ENCODE measurements at regions of chr13 and their contacts with region 1.

Region 1: DNA sequence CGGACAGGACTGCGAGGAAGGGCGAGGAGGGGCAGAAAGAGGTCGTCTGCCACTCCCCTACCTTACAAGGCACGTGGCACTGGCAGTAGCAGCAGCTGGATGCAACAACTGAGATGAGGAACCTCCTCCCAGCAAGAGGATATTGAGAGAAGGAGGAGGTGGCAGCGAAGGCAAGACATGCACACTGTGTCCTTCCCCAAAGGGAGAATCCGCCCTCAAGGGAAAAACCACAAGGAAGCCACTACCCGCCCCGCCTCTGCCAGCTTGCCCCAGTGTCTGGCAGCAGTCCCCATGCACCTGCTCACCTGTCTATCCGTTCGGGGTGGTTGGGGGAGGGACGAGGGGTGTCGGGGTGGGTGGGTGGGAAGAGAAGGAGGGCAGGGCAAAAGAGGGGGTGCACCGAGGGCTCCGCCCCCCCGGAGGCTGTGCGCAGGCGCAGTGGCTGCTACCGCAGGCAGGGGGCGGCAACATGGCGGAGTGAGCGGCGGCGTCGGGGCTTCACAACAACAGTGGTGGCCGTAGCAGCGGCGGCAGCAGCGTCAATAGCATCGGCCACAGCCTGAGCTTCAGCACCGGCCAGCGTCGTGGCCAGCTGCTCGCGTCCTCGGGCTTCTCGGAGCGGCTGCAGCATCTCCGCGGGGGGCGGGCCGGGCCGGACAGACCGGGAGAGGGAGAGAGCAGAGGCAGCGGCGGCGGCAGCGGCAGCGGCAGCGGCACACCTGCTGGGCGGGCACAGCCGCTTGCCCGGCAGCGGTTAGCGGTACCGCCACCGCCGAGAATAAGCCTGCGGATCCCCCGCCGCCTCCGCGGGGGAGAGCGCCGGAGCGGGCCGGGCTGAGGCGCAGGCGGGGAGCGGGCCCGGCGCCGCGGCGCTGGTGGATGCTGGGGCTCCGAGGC is at the start of gene NBEA:
- DNase-seq: peak; percentile 81
- H3K4me3 ChIP-seq: peak within 1 kb of the TSS; percentile 96
- H3K27ac ChIP-seq: no peak within 1 kb of the TSS
- H3K4me1 ChIP-seq: peaks cover 33% of the 10 kb centered on the region
- CTCF ChIP-seq: no peak
- total RNA-seq, gene NBEA: 3.6 and 3.8 TPM in 2 replicates

Region 2: DNA sequence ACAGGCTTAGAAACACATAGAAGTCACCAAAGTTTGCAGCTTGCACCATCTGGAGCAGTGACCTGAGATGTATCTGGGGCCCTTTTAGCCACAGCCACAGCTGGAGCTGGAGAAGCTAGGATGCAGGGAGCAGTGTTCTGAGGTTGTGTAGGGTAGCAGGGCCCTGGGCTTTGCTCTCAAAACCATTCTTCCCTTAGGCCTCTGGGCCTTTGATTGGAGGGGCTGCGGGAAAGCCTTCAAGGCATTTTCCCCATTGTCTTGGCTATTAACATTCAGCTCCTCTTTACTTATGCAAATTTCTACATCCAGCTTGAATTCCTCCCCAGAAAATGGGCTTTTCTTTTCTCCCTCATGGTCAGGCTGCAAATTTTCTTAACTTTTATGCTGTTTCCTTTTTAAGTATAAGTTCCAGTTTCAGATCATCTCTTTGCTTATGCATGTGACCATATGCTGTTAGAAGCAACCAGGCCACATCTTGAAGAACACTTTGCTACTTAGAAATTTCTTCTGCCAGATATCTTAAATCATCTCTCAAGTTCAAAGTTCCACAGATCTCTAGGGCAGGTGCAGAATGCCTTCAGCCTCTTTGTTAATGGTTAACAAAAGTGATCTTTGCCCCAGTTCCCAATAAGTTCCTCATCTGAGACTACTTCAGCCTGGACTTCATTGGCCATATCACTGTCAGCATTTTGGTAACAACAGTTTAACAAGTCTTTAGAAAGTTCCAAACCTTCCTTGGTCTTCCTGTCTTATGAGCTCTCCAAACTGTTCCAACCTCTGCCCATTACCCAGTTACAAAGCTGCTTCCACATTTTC is 48.5 kb after region 1 on chr13:
- CTCF ChIA-PET with region 1: no interaction called
- POLR2A ChIA-PET with region 1: no interaction called
- intact Hi-C with region 1: no loop called
- DNase-seq: no peak
- H3K4me3 ChIP-seq: no peak overlapping the region
- H3K27ac ChIP-seq: no peak overlapping the region
- H3K4me1 ChIP-seq: no peaks in the 10 kb centered on the region
- CTCF ChIP-seq: no peak

Region 3: GRCh38 chr13:35157143-35157755 is 215.2 kb after region 1 on chr13:
- CTCF ChIA-PET with region 1: no interaction called
- POLR2A ChIA-PET with region 1: interaction called, 3 read pairs
- intact Hi-C with region 1: loop called (anchors 2 kb)
- DNase-seq: peak; percentile 59
- H3K4me3 ChIP-seq: no peak overlapping the region
- H3K27ac ChIP-seq: no peak overlapping the region
- H3K4me1 ChIP-seq: no peaks in the 10 kb centered on the region
- CTCF ChIP-seq: peak; percentile 87